ENCODE measurements at regions of chr3 and their contacts with region 1.

Region 1: DNA sequence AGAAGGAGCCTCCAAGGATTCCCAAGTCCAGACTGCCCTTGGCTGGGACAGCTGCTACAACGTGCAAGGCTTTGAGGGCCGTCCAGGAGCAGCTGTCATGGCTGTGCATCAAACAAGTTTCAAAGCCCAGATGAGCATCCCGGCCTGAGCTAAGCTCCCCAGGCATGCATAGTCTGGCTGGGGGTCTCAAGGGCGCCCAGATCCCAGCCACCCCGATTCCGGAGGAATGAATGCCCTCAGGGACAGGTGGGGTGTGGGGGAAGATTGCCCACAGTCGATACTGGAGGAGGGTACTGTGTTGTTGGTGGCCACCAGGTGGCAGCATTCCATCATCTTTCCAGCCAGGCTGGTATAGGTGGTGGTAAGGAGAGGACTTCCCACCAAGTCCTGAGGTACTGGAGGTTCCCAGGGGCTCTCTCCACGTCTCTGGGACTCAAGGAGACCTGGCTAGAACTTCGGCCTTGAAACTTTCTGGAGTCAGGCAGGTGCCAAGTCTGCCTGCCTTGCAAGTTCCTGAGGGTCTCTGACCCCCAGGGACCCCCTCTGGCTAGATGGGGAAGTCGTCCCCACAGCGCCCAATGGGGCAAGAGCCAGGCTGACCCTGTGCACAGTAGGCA is 32.8 kb downstream of the RBM5 start:
- DNase-seq: peak; percentile 69 to 72
- ATAC-seq: peak; percentile 78 to 92 (median 86)
- H3K4me3 ChIP-seq: no peak overlapping the region
- H3K27ac ChIP-seq: no peak overlapping the region
- H3K4me1 ChIP-seq: peaks cover 2 to 28% (median 8%) of the 10 kb centered on the region in 9 donors
- H3K27me3 ChIP-seq: no peaks in the 10 kb centered on the region
- CTCF ChIP-seq: peak; percentile 63 to 92 (median 85)

Region 2: DNA sequence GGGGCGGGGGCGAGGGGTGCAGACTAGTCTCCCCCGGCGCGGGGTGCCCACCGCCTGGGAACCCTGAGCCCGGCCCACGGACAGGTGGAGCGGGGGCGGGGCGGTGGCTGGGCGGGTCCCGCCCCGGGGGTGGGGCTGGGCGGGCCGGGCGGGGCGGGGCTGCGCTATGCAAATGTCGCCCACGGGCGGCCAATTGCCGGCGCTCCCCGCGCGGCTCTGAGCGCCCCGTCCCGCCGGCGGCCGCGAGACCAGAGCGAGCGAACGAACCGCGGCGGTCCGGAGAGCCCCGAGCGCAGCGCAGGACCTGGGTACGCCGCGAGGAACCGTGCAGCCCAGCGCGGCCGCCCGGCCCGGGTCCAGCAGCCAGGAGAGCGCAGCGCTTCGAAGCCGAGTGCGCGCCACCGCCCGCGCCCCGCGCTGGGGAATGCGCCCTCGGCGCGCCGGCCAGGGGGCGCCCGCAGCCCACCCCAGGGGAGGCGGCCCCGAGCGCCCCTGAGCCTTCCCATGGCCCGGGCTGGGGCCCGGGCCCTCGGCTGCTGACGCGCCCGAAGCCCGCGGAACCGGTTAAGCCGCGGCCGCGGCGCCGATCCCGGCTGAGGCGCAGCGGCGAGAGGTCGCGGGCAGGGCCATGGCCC is 33.4 kb after region 1 on chr3 and contains the start of gene SEMA3F:
- intact Hi-C with region 1: loop called in 1 of 10 experiments (anchors 2 kb)
- DNase-seq: peak; percentile 39 to 70
- ATAC-seq: peak; percentile 67 to 88 (median 82)
- H3K4me3 ChIP-seq: peak within 1 kb of the TSS; percentile 19 to 67 (median 60)
- H3K27ac ChIP-seq: peak within 1 kb of the TSS; percentile 68 to 91 (median 84)
- H3K4me1 ChIP-seq: peaks cover 5 to 45% (median 28%) of the 10 kb centered on the region in 9 donors
- H3K27me3 ChIP-seq: peaks cover 0 to 41% (median 0%) of the 10 kb centered on the region in 7 donors
- CTCF ChIP-seq: peak in 6 of 9 donors; percentile 5 to 48 (median 43)
- total RNA-seq, gene SEMA3F: 5.1 to 37.2 (median 10.2) TPM

Region 3: DNA sequence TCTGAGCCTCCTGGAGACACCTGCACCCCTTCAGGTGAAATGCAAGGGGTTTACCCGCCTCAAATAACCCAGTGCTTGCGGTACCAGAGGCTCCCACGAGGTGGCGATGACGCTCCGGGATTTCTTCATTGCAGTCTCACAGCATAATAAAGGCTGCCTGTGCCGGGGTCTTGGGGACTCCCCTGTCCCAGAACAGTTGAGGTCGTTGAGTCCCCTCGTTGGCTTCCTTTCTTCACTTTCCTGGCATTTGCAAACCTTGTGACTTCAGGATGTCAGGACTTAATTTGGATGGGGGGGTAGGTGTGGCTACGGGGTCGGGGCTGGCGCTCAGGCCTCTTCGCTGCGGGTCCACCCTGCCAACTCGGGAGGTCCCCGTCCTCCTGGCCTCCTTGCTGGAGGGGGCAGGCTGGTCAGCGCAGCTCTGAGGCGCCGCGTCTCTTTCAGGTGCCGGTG is 71.2 kb after region 1 on chr3:
- intact Hi-C with region 1: loop called (anchors 1 to 5 kb)
- DNase-seq: peak; percentile 61 to 74
- ATAC-seq: peak in 4 of 8 donors; percentile 22 to 43 (median 33)
- H3K4me3 ChIP-seq: no peak overlapping the region
- H3K27ac ChIP-seq: no peak overlapping the region
- H3K4me1 ChIP-seq: peaks cover 0 to 28% (median 21%) of the 10 kb centered on the region in 9 donors
- H3K27me3 ChIP-seq: peaks cover 17 to 44% (median 31%) of the 10 kb centered on the region in 7 donors
- CTCF ChIP-seq: peak; percentile 84 to 93 (median 88)

Region 4: DNA sequence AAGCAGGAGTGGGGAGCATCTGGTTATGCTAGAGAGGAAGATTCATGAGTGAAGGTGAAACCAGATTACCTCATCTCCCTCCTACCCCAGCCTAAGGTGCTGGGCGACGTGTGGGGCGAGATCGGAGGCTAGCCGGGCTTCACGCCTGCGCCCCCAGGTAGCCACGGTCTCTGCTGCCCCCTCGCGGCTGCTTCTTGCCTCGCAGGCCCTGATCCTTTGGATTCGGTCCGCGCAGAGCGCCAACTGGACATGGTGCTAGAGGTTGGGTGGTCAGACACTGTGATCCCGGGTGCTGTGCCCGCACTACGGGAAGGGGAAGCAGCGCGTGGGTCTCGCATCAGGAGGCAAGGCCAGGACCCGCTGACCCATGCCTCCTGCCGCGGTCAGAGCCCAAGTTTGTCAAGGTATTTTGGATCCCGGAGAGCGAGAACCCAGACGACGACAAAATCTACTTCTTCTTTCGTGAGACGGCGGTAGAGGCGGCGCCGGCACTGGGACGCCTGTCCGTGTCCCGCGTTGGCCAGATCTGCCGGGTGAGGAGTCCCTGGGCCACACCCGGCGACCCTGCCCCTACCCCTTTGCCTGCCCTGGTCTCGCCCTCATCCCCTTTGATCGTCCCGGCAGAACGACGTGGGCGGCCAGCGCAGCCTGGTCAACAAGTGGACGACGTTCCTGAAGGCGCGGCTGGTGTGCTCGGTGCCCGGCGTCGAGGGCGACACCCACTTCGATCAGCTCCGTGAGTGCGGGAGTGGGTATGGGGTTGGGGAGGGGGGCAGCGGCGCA is 151.6 kb after region 1 on chr3:
- intact Hi-C with region 1: loop called in 5 of 10 experiments (anchors 2 to 10 kb)
- DNase-seq: peak; percentile 83 to 90
- ATAC-seq: peak; percentile 43 to 84 (median 70)
- H3K4me3 ChIP-seq: peak overlapping the region in 9 of 10 donors; percentile 18 to 54 (median 38)
- H3K27ac ChIP-seq: peak overlapping the region in 5 of 10 donors; percentile 1 to 44 (median 41)
- H3K4me1 ChIP-seq: peaks cover 2 to 60% (median 42%) of the 10 kb centered on the region in 9 donors
- H3K27me3 ChIP-seq: peaks cover 0 to 47% (median 10%) of the 10 kb centered on the region in 7 donors
- CTCF ChIP-seq: peak; percentile 96 to 99 (median 98)